ENCODE measurements at regions of chr10 and their contacts with region 1.

Region 1: GRCh38 chr10:12902135-12902572 is 99.4 kb downstream of the CCDC3 start:
- DNase-seq: peak; percentile 20 to 72
- ATAC-seq: peak in 1 of 3 donors; percentile 68
- H3K4me3 ChIP-seq: no peak overlapping the region
- H3K4me3 Mint-ChIP-seq: no peak overlapping the region
- H3K27ac ChIP-seq: no peak overlapping the region
- H3K27ac Mint-ChIP-seq: no peak overlapping the region
- H3K4me1 ChIP-seq: no peaks in the 10 kb centered on the region
- H3K4me1 Mint-ChIP-seq: no peaks in the 10 kb centered on the region
- H3K27me3 ChIP-seq: no peaks in the 10 kb centered on the region
- H3K27me3 Mint-ChIP-seq: peaks cover 7 to 28% of the 10 kb centered on the region in 2 donors
- CTCF ChIP-seq: peak; percentile 59

Region 2: GRCh38 chr10:12214763-12215218 is 687.4 kb before region 1 on chr10:
- intact Hi-C with region 1: loop called (anchors 2 kb)
- DNase-seq: peak in 1 of 2 donors; percentile 79
- ATAC-seq: peak; percentile 60 to 79 (median 68)
- H3K4me3 ChIP-seq: peak overlapping the region; percentile 29
- H3K4me3 Mint-ChIP-seq: peak overlapping the region; percentile 79
- H3K27ac ChIP-seq: peak overlapping the region; percentile 43
- H3K27ac Mint-ChIP-seq: peak overlapping the region; percentile 85 to 88
- H3K4me1 ChIP-seq: no peaks in the 10 kb centered on the region
- H3K4me1 Mint-ChIP-seq: peaks cover 16 to 18% of the 10 kb centered on the region in 2 donors
- H3K27me3 ChIP-seq: no peaks in the 10 kb centered on the region
- H3K27me3 Mint-ChIP-seq: no peaks in the 10 kb centered on the region
- CTCF ChIP-seq: peak; percentile 88

Region 3: DNA sequence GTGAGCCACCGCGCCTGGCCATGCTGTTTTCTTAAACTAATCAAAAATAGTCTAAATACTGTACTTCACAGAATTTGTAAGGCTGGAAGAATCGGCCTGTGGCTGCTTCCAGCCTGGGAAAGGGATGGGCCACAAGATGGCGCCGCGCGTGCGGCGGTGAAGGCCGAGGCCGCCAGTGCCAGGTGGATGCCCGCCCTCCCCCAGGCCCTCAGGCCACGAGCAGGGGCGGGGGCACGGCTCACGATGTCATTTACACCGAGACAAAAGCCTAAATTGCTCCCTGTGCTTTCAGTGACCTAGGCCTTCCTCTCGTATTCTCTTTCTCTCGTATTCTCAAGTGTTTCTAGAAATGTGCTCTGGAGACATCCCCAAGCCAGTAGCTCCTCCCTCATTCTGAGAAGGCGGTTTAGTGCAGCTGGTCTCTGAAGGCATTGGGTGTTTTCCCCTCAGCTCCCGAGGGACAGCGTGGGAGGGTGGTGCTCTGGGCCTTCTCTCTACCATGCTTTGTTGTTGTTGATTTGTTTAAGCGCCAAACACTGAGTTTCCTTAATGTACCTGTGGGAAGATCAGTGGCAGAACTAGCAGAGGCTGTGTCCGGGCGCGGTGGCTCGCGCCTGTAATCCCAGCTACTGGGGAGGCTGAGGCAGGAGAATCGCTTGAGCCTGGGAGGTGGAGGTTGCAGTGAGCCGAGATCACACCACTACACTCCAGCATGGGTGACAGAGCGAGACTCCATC is 637.8 kb before region 1 on chr10:
- intact Hi-C with region 1: loop called (anchors 5 kb)
- DNase-seq: peak; percentile 51 to 82
- ATAC-seq: peak; percentile 41 to 69 (median 51)
- H3K4me3 ChIP-seq: no peak overlapping the region
- H3K4me3 Mint-ChIP-seq: peak overlapping the region; percentile 55
- H3K27ac ChIP-seq: peak overlapping the region; percentile 91
- H3K27ac Mint-ChIP-seq: peak overlapping the region in 1 of 2 donors; percentile 60
- H3K4me1 ChIP-seq: peaks cover 46% of the 10 kb centered on the region
- H3K4me1 Mint-ChIP-seq: peaks cover 25 to 30% of the 10 kb centered on the region in 2 donors
- H3K27me3 ChIP-seq: peaks cover 5% of the 10 kb centered on the region
- H3K27me3 Mint-ChIP-seq: peaks cover 18 to 25% of the 10 kb centered on the region in 2 donors
- CTCF ChIP-seq: peak; percentile 57

Region 4: DNA sequence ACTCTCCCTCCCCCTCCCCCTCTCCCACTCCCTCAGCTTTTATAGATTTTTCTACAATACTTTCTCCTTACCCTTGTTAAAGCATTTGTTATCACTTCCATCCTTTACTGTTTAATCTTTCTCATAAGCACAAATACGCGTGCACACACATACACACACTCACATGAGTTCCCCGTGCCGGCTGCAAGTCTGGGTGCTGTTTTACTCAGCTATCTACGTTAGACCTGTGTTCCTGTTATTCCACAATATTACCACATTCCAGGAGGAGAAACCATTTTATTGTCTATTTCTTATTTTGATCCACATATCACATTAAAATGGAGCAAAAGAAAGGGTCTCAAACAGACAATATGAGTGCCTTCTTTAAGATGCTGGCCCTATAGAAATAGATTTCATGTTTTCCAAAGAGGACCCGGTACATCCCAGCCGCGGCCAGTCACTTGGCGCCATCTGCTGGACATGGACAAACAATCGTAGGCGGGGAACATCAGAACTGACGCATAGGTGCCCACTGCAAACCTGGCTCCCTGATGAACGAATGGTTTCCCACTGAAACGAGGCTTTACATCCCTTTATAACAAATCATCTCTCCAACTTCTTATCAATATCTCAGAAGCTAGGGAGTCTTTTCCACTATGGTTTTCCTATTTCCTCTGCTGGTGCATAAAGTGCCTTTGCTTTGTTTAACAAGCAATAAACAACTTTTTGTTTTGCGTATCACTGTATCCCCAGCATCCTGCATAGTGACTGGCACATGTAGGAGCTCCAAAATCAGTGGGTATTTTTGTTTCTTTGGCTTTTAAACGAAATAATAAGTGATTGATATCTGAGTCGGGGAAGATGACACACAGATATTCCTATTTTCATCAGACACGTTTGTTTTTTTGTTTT is 172.7 kb after region 1 on chr10:
- intact Hi-C with region 1: loop called (anchors 5 kb)
- DNase-seq: peak; percentile 37 to 63
- ATAC-seq: peak in 2 of 3 donors; percentile 52 to 83
- H3K4me3 ChIP-seq: no peak overlapping the region
- H3K4me3 Mint-ChIP-seq: no peak overlapping the region
- H3K27ac ChIP-seq: no peak overlapping the region
- H3K27ac Mint-ChIP-seq: no peak overlapping the region
- H3K4me1 ChIP-seq: no peaks in the 10 kb centered on the region
- H3K4me1 Mint-ChIP-seq: peaks cover 0 to 7% of the 10 kb centered on the region in 2 donors
- H3K27me3 ChIP-seq: peaks cover 7% of the 10 kb centered on the region
- H3K27me3 Mint-ChIP-seq: peaks cover 18 to 28% of the 10 kb centered on the region in 2 donors
- CTCF ChIP-seq: peak; percentile 73

Region 5: GRCh38 chr10:13567030-13567429 is 664.9 kb after region 1 on chr10:
- intact Hi-C with region 1: no loop called
- DNase-seq: no peak
- ATAC-seq: no peak
- H3K4me3 ChIP-seq: no peak overlapping the region
- H3K4me3 Mint-ChIP-seq: no peak overlapping the region
- H3K27ac ChIP-seq: no peak overlapping the region
- H3K27ac Mint-ChIP-seq: no peak overlapping the region
- H3K4me1 ChIP-seq: no peaks in the 10 kb centered on the region
- H3K4me1 Mint-ChIP-seq: no peaks in the 10 kb centered on the region
- H3K27me3 ChIP-seq: no peaks in the 10 kb centered on the region
- H3K27me3 Mint-ChIP-seq: peaks cover 19 to 28% of the 10 kb centered on the region in 2 donors
- CTCF ChIP-seq: no peak